ENCODE measurements at regions of chr9 and their contacts with region 1.

Region 1: DNA sequence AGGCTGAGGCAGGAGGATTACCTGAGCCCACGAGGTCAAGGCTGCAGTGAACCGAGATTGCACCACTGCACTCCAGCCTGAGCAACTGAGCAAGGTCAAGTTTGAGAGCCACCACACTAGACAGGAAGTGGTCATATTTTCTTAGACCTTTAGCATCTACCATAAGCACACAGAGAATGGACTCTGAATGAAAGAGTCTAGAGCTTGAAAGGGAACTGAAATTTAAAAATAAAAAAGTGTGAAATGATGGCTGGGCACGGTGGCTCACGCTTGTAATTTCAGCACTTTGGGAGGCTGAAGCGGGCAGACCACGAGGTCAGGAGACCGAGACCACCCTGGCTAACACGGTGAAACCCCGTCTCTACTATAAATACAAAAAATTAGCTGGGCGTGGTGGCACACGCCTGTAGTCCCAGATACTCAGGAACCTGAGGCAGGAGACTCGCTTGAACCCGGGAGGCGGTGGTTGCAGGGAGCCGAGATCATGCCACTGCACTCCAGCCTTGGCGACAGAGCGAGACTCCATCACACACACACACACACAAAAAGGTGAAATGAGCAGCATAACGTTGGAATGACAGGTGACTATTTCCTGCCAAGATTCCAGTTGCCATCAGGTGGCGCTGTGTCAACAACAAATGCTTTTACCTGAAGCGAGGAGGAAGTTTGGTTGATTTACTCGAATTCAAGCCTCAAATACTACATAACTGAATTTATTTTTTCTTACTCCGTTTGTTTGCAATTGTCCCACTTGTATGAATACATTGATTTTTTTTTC is 21.3 kb upstream of the AK3 start:
- DNase-seq: peak; percentile 75 to 79 (median 77)
- H3K4me3 ChIP-seq: no peak overlapping the region
- H3K4me3 Mint-ChIP-seq: peak overlapping the region in 6 of 8 donors; percentile 17 to 54 (median 42)
- H3K27ac ChIP-seq: no peak overlapping the region
- H3K27ac Mint-ChIP-seq: peak overlapping the region in 2 of 7 donors; percentile 28 to 71
- H3K4me1 ChIP-seq: peaks cover 11% of the 10 kb centered on the region
- H3K4me1 Mint-ChIP-seq: peaks cover 5 to 12% (median 6%) of the 10 kb centered on the region in 4 donors
- H3K27me3 ChIP-seq: peaks cover 4% of the 10 kb centered on the region
- H3K27me3 Mint-ChIP-seq: peaks cover 0 to 4% of the 10 kb centered on the region in 2 donors

Region 2: GRCh38 chr9:4740638-4741364 is 21.5 kb before region 1 on chr9 and contains the start of gene AK3:
- CTCF ChIA-PET with region 1: interaction called, 152 read pairs
- POLR2A ChIA-PET with region 1: interaction called, 8 read pairs
- intact Hi-C with region 1: no loop called
- DNase-seq: peak; percentile 82 to 87 (median 84)
- H3K4me3 ChIP-seq: peak within 1 kb of the TSS; percentile 79 to 84
- H3K4me3 Mint-ChIP-seq: peak within 1 kb of the TSS; percentile 91 to 97 (median 94)
- H3K27ac ChIP-seq: peak within 1 kb of the TSS; percentile 78
- H3K27ac Mint-ChIP-seq: peak within 1 kb of the TSS; percentile 65 to 96 (median 94)
- H3K4me1 ChIP-seq: peaks cover 29% of the 10 kb centered on the region
- H3K4me1 Mint-ChIP-seq: peaks cover 20 to 44% (median 32%) of the 10 kb centered on the region in 4 donors
- H3K27me3 ChIP-seq: no peaks in the 10 kb centered on the region
- H3K27me3 Mint-ChIP-seq: no peaks in the 10 kb centered on the region
- total RNA-seq, gene AK3: 23.1 to 25.2 TPM

Region 3: DNA sequence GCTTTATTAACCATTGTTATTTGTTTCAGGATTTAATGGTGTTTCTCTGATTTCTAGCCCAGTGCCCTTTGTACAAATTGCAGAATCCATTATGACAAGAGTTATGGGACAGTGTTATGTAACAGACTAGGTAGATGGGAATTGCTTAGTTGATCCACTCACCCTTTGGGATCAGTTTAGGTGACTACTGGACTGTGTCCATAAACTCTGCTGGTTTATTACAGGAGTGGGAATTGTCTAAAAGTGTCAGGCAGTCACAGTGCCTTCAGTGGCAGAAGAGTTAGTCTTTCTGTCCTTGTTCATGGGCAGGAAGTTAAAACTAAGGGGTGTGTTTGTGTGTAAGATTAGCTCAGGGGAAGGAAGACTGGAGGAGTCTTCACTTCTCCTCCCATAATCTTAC is 59.8 kb after region 1 on chr9:
- CTCF ChIA-PET with region 1: interaction called, 11 read pairs
- POLR2A ChIA-PET with region 1: no interaction called
- intact Hi-C with region 1: no loop called
- DNase-seq: no peak
- H3K4me3 ChIP-seq: no peak overlapping the region
- H3K4me3 Mint-ChIP-seq: peak overlapping the region in 1 of 8 donors; percentile 34
- H3K27ac ChIP-seq: no peak overlapping the region
- H3K27ac Mint-ChIP-seq: peak overlapping the region in 2 of 7 donors; percentile 28 to 39
- H3K4me1 ChIP-seq: no peaks in the 10 kb centered on the region
- H3K4me1 Mint-ChIP-seq: peaks cover 11 to 28% (median 20%) of the 10 kb centered on the region in 4 donors
- H3K27me3 ChIP-seq: no peaks in the 10 kb centered on the region
- H3K27me3 Mint-ChIP-seq: no peaks in the 10 kb centered on the region

Region 4: GRCh38 chr9:5073701-5074100 is 311.4 kb after region 1 on chr9:
- CTCF ChIA-PET with region 1: no interaction called
- POLR2A ChIA-PET with region 1: no interaction called
- intact Hi-C with region 1: loop called (anchors 10 kb)
- DNase-seq: no peak
- H3K4me3 ChIP-seq: no peak overlapping the region
- H3K4me3 Mint-ChIP-seq: no peak overlapping the region
- H3K27ac ChIP-seq: no peak overlapping the region
- H3K27ac Mint-ChIP-seq: no peak overlapping the region
- H3K4me1 ChIP-seq: no peaks in the 10 kb centered on the region
- H3K4me1 Mint-ChIP-seq: peaks cover 0 to 2% (median 0%) of the 10 kb centered on the region in 4 donors
- H3K27me3 ChIP-seq: no peaks in the 10 kb centered on the region
- H3K27me3 Mint-ChIP-seq: no peaks in the 10 kb centered on the region

Region 5: GRCh38 chr9:5425006-5425628 is 662.8 kb after region 1 on chr9:
- CTCF ChIA-PET with region 1: interaction called, 5 read pairs
- POLR2A ChIA-PET with region 1: no interaction called
- intact Hi-C with region 1: loop called (anchors 1 kb)
- DNase-seq: peak in 4 of 5 donors; percentile 48 to 53 (median 50)
- H3K4me3 ChIP-seq: no peak overlapping the region
- H3K4me3 Mint-ChIP-seq: no peak overlapping the region
- H3K27ac ChIP-seq: no peak overlapping the region
- H3K27ac Mint-ChIP-seq: peak overlapping the region in 1 of 7 donors; percentile 56
- H3K4me1 ChIP-seq: no peaks in the 10 kb centered on the region
- H3K4me1 Mint-ChIP-seq: peaks cover 3 to 12% (median 6%) of the 10 kb centered on the region in 4 donors
- H3K27me3 ChIP-seq: no peaks in the 10 kb centered on the region
- H3K27me3 Mint-ChIP-seq: no peaks in the 10 kb centered on the region

Measured in CD4-positive, alpha-beta memory T cell (primary cell).